Posterior cingulate gyrus (tissue), 11 donors: ENCODE measurements at regions of chrX and their contacts with region 1.

Region 1: DNA sequence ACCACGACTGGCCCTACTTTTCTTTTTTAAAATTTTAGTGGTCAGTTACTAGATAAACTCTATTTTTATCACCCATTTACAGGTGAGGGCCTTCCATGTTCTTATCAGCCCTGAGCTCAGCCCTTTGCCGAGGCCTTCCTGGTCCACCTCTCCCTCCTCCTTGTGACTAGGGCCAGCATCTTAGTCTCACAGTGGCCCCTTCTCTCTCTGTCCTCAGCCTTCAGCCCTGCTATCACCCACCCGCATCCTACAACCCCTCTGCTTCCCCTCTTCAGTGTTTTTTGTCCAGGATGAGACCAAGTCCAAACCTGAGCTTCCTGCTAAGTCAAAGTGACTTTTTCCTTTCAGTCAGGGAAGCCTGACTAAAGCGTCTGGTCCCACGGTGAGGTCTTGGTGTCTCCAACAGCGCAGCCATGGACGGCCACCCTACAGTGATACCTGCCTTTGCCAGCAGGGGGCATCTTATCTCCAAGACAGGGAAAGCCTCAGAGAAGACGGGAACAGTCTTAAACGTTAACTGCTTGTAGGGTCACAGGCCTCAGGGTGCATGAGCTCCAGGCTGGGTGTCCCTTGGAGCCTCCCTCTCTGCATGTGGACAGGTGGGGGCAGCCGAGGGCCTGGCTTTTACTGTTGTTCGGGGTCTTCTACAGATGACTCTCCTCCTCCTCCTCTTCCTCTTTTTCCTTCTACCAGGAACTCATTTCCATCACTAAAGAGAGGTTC is 11.7 kb upstream of the GAGE10 start:
- DNase-seq: peak in 8 of 10 donors; percentile 37 to 90 (median 56)

Region 2: GRCh38 chrX:49673394-49673793 is 381.6 kb after region 1 on chrX:
- intact Hi-C with region 1: no loop called
- DNase-seq: no peak

Region 3: DNA sequence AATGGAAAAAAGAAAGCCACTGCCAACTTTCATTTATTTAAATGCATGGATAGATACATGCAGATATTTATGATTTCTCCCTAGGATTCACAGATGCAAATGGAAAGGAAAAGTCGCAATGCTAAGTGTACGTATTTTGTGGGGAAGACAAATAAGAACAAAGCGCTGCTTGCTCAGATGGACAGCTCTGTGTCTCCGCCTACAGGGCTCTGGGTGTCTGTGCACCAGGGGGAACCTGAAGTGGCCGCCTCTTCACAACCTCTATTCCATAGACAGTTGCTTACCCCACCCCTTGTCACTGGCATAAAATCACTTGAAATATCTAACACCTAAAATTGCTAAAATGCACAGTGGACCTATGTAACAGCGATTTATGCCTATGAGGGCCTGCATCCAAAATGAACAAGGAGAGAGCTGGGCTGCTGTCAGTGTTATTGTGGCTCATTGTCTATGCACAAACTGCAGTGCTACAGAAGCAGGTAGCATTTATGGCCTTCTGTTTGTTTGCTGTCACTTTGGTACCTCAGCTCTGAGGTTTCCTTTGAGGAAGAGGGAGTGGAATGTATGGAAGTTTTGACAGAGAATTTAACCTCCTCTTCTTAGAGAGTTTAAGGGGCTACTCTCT is 462.6 kb after region 1 on chrX:
- intact Hi-C with region 1: loop called (anchors 10 kb)
- DNase-seq: peak in 5 of 10 donors; percentile 9 to 83 (median 23)

Region 4: DNA sequence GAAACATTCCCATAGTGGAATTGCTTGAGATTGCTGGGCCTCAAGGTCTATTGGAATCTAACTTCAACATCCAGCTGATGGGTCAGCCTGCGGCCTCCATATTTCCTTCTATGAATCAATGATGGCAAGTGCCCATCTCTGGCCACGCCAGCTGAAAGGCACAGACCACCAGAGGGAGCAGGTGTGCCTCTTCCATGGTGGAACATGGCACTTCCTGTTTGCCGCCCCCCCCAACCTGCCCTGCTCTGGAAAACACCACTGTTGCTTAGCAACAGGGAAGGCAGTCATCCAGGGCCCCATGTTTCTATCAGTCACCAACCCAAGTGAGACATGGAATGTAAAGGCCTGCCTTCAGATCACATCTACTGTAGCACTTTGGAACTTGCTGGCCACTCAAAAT is 548.9 kb after region 1 on chrX:
- intact Hi-C with region 1: loop called (anchors 10 kb)
- DNase-seq: peak; percentile 41 to 95 (median 71)